ENCODE measurements at regions of chr16 and their contacts with region 1.

Region 1: DNA sequence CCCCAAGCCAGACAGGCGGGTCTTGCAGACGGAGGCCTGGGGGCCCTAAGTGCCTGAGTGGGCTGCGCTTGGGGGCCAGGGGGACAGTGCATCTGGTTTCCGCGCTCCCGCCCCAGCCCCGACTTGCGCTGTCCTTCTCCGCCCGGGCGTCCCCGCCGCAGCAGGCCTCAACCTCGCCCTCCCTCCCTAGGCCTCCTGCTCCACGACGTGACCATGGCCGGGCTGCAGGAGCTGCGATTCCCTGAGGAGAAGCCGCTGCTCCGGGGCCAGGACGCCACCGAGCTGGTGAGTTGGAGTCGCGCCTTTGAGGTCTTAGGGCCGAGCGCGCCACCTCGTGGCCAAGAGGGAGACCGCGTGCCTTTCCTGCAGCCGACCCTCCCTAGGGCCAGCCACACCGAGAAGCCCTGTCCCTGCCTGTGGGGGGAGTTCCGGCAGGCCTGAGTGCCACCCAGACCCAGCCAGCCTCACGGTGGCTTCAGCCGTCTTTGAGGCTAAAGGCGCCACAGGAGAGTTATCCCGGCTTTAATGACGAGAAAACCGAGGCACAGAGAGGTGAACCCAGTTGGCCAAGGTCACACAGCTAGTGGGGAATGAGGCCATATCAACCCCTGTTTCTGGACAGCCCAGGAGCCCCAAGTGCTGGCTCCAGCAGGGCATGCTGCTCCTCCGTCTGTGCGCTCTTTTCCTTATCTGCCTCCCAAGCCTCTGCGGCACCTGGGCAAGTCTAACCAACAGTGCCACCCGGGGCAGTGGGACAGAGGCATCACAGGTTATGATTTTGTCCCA is 12.2 kb upstream of the NDRG4 start:
- DNase-seq: peak; percentile 92
- ATAC-seq: peak; percentile 74

Region 2: GRCh38 chr16:58336332-58337089 is 151.2 kb before region 1 on chr16:
- intact Hi-C with region 1: loop called (anchors 1 kb)
- DNase-seq: peak; percentile 84
- ATAC-seq: peak; percentile 66

Region 3: DNA sequence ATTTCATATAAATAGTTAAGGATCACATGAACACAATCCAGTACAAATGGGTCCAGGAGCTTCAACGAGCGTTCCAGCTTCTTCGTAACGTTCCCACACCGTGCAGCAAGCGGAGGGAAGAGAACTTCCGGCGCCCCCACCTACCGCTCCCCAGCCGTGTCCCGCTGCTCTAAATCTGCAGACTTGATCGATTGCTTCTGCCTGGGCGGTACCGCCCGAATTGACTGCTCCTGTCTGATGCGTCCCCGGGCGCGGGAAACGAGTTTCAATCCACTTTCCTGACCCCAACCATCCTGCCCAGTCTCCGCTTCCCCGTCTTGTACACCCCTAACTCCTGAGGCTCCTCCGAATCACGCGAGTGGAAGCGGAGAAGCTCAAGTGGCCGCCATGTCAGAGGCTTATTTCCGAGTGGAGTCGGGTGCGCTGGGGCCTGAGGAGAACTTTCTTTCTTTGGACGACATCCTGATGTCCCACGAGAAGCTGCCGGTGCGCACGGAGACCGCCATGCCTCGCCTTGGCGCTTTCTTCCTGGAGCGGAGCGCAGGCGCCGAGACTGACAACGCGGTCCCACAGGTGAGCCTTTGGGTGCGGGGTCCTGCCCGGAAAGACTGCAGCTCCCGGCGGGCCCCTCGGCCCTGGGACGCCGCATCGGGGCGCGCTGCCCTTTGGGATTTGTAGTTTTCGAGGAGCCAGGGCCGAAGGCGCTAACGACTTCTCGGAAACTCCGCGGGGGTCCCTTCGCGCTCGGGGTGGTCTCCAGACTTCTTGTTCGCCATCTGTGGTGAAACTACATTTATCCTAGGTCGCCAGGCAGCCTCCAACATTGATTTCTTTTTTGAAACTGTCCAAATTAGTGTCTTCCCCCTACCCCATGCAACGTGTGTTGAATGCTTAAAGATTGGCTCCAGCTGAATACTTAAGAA is 95.3 kb before region 1 on chr16 and contains the start of gene GINS3:
- intact Hi-C with region 1: loop called (anchors 5 kb)
- DNase-seq: peak; percentile 91
- ATAC-seq: peak; percentile 97
- total RNA-seq, gene GINS3: 6.5 TPM

Region 4: GRCh38 chr16:58418601-58419000 is 69.2 kb before region 1 on chr16:
- intact Hi-C with region 1: loop called (anchors 5 kb)
- DNase-seq: no peak
- ATAC-seq: peak; percentile 80

Region 5: DNA sequence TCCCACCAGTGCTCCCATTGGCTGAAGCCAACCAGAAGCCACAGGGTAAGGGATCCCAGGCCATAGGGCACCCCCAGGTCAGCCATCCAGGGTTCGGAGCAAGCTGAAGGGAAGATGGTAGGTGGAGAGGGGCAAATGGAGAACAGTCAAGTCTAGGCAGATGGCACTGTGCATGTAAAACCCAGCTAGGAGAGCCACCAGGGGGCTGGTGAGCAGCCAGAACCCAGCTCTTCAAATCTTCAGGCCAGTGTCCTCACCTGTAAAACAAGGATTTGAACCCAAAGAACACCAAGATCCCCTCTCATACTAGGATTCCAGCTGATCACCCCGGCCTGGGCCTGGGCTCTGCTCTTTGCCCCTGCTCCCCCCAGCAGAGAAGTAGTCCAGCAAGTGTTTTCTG is 52.0 kb before region 1 on chr16:
- intact Hi-C with region 1: no loop called
- DNase-seq: no peak
- ATAC-seq: no peak